ENCODE measurements at regions of chr5 and their contacts with region 1.

Region 1: GRCh38 chr5:100623719-100624118 is 88.5 kb downstream of the FAM174A start:
- DNase-seq: no peak
- H3K4me3 Mint-ChIP-seq: no peak overlapping the region
- H3K27ac Mint-ChIP-seq: no peak overlapping the region
- H3K4me1 Mint-ChIP-seq: no peaks in the 10 kb centered on the region
- H3K27me3 Mint-ChIP-seq: no peaks in the 10 kb centered on the region

Region 2: GRCh38 chr5:101045689-101046088 is 422.0 kb after region 1 on chr5:
- CTCF ChIA-PET with region 1: no interaction called
- POLR2A ChIA-PET with region 1: no interaction called
- intact Hi-C with region 1: loop called (anchors 2 kb)
- DNase-seq: no peak
- H3K4me3 Mint-ChIP-seq: no peak overlapping the region
- H3K27ac Mint-ChIP-seq: no peak overlapping the region
- H3K4me1 Mint-ChIP-seq: peaks cover 2% of the 10 kb centered on the region
- H3K27me3 Mint-ChIP-seq: no peaks in the 10 kb centered on the region

Region 3: GRCh38 chr5:101390151-101390908 is 766.6 kb after region 1 on chr5:
- CTCF ChIA-PET with region 1: interaction called, 3 read pairs
- POLR2A ChIA-PET with region 1: no interaction called
- intact Hi-C with region 1: loop called (anchors 1 kb)
- DNase-seq: no peak
- H3K4me3 Mint-ChIP-seq: no peak overlapping the region
- H3K27ac Mint-ChIP-seq: no peak overlapping the region
- H3K4me1 Mint-ChIP-seq: no peaks in the 10 kb centered on the region
- H3K27me3 Mint-ChIP-seq: no peaks in the 10 kb centered on the region

Measured in activated CD4-positive, alpha-beta memory T cell treated with anti-CD3 and anti-CD28 coated beads for 36 hours (primary cell).